B cell (primary cell): ENCODE measurements at regions of chr1 and their contacts with region 1.

Region 1: DNA sequence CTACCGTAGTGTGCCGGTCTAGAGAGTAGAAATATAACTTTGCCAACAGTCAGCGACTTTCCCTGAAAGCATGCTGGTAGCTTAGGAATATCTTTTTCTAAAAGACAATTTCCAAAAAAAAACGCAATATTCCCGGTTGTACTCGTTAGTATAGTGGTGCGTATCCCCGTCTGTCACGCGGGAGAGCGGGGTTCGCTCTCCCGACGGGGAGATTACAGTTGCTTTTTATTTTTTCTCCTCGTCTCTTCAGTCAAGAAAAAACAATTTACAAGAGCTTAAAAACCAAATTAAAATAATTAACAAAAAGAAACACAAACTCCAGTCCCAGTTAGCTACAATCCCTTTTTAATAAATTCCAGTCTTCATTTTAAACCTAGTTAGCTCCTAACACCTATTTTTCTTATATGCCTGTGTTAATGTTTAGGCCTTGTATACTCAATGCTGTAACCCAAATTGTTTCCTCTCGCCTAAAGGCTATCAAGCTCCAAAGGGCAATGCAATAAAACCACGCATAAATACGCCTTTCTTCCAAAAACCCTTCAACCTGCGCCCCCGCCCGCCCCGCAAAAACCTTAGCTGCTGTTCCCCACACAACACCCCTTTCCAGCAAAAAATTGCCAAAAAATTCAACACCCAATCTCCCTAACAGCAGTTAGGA is 7.8 kb downstream of the HSPA6 start:
- DNase-seq: no peak
- ATAC-seq: no peak
- H3K4me3 ChIP-seq: no peak overlapping the region
- H3K4me3 Mint-ChIP-seq: peak overlapping the region; percentile 42
- H3K27ac ChIP-seq: no peak overlapping the region
- H3K27ac Mint-ChIP-seq: peak overlapping the region; percentile 60
- H3K4me1 ChIP-seq: peaks cover 2 to 13% of the 10 kb centered on the region in 2 donors
- H3K4me1 Mint-ChIP-seq: peaks cover 14% of the 10 kb centered on the region
- H3K27me3 ChIP-seq: no peaks in the 10 kb centered on the region
- H3K27me3 Mint-ChIP-seq: peaks cover 5% of the 10 kb centered on the region
- CTCF ChIP-seq: no peak

Region 2: GRCh38 chr1:161427733-161428516 is 104.2 kb before region 1 on chr1:
- CTCF ChIA-PET with region 1: no interaction called
- POLR2A ChIA-PET with region 1: no interaction called
- intact Hi-C with region 1: loop called (anchors 10 kb)
- DNase-seq: peak; percentile 64
- ATAC-seq: peak; percentile 66
- H3K4me3 ChIP-seq: no peak overlapping the region
- H3K4me3 Mint-ChIP-seq: peak overlapping the region; percentile 64
- H3K27ac ChIP-seq: no peak overlapping the region
- H3K27ac Mint-ChIP-seq: peak overlapping the region; percentile 66
- H3K4me1 ChIP-seq: peaks cover 6% of the 10 kb centered on the region in 2 donors
- H3K4me1 Mint-ChIP-seq: peaks cover 12% of the 10 kb centered on the region
- H3K27me3 ChIP-seq: peaks cover 1 to 32% (median 21%) of the 10 kb centered on the region in 4 experiments
- H3K27me3 Mint-ChIP-seq: peaks cover 48% of the 10 kb centered on the region
- CTCF ChIP-seq: no peak

Region 3: DNA sequence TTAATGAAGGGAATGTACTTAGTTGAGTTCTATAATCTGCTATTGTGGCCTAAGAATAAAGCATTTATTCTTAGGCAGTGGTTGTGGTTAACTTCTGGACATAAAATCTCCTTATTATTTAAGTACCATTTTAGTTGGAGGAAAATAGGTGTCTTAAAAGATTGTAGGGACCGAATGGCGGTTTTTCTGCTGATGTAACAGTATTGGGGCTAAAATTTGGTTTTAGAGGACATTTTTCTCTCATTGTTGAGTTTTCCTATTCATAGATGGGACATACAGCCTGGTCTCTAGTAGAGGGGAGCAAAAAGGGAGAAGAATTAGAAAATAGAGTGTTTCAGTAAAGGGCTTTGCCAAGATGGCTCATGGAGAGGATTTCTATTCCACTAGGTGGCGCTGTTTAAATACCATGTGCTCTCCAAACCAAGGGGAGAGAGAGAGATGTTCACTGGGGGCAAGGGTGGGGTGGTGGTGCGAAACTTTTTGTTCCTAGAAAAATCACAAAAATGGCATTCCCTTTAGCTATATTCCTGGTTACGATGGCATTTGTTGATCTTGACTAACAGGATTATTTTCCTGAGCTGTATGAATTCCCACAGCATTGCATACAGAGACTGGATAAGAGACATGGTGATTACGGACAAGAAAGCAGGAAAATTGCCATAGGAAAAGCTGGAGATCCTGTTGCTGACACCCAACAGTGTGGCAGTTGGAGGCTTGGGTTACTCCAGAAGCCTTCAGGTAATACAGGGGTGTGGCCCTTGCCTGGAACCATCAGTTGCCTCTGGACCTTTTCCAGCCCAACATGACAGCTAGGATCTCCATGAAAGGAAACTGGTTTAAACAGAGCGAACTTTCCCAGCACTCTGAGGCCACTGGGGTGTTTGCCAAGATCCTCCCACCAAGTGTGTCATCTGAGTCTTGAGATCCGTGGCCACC is 45.0 kb before region 1 on chr1:
- CTCF ChIA-PET with region 1: no interaction called
- POLR2A ChIA-PET with region 1: no interaction called
- intact Hi-C with region 1: loop called (anchors 2 kb)
- DNase-seq: peak; percentile 80
- ATAC-seq: peak; percentile 78
- H3K4me3 ChIP-seq: no peak overlapping the region
- H3K4me3 Mint-ChIP-seq: no peak overlapping the region
- H3K27ac ChIP-seq: no peak overlapping the region
- H3K27ac Mint-ChIP-seq: no peak overlapping the region
- H3K4me1 ChIP-seq: peaks cover 3 to 6% of the 10 kb centered on the region in 2 donors
- H3K4me1 Mint-ChIP-seq: peaks cover 8% of the 10 kb centered on the region
- H3K27me3 ChIP-seq: peaks cover 0 to 36% (median 7%) of the 10 kb centered on the region in 4 experiments
- H3K27me3 Mint-ChIP-seq: peaks cover 36% of the 10 kb centered on the region
- CTCF ChIP-seq: peak; percentile 82